ENCODE measurements at regions of chr3 and their contacts with region 1.

Region 1: DNA sequence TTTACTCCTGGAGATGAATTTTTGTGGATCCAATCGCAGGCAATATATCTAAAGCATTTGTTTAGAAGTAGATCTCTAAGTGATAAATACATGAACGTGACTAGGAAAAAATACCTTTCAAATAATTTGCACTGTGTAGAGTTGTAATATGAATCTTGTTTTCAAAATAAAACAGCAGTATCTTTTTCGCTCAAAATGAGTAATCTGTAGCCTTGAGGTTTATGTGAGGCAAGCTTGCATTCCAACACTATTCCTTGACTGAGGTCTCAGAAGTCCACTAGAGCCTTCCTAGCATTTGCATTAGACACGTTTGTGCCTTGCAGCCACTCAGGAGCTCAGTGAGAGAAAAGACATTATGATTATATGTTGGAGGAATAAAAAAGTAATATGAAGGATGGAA is 138.3 kb upstream of the ROBO1 start:
- DNase-seq: no peak
- ATAC-seq: no peak
- H3K4me3 Mint-ChIP-seq: no peak overlapping the region
- H3K27ac Mint-ChIP-seq: no peak overlapping the region
- H3K4me1 Mint-ChIP-seq: no peaks in the 10 kb centered on the region
- H3K27me3 Mint-ChIP-seq: no peaks in the 10 kb centered on the region
- CTCF ChIP-seq: no peak

Region 2: GRCh38 chr3:79846148-79846933 is 59.8 kb before region 1 on chr3:
- CTCF ChIA-PET with region 1: no interaction called
- POLR2A ChIA-PET with region 1: no interaction called
- intact Hi-C with region 1: loop called (anchors 10 kb)
- DNase-seq: no peak
- ATAC-seq: no peak
- H3K4me3 Mint-ChIP-seq: no peak overlapping the region
- H3K27ac Mint-ChIP-seq: no peak overlapping the region
- H3K4me1 Mint-ChIP-seq: no peaks in the 10 kb centered on the region
- H3K27me3 Mint-ChIP-seq: no peaks in the 10 kb centered on the region
- CTCF ChIP-seq: no peak

Measured in activated B cell treated with CpG ODN at 0.5 μM for 24 hours (primary cell).